ENCODE measurements at regions of chr15 and their contacts with region 1.

Region 1: DNA sequence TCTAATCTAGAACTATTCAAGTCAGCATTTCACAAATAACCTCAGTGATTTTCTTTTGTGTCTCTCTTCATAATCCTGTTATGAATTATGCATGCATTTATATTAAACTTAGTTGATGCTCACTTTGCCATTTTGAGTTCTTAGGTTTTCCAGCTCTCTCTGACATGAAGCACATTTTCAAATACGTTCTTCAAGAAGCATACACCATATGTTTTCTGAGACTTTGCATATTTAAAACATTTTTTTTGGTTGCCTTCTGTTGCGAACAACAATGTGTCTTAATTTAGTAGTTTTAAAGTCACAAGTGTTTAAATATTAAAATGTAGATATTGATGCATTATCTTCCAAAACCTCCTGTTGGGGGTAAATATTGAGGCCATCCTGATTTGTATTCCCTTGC is 37.5 kb downstream of the SH3GL3 start:
- DNase-seq: no peak
- H3K4me3 ChIP-seq: no peak overlapping the region
- H3K27ac ChIP-seq: no peak overlapping the region
- H3K4me1 ChIP-seq: no peaks in the 10 kb centered on the region
- H3K27me3 ChIP-seq: no peaks in the 10 kb centered on the region
- CTCF ChIP-seq: no peak
- POLR2A ChIP-seq: no peak

Region 2: DNA sequence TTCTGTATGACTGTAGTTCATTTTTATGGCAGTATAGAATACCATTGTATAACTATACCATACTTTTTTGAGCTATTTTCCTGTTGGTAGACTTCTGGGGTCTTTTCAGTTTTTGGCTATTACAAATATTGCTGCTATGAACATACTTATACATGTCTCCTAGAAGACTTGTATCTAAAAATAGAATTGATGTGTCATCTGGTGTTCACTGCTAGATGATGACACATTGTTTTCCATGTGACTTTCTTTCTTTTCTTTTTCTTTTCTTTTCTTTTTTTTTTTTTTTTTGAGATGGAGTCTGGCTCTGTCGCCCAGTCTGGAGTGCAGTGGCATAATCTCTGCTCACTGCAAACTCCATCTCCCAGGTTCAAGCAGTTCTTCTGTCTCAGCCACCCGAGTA is 32.3 kb after region 1 on chr15:
- intact Hi-C with region 1: loop called (anchors 2 kb)
- DNase-seq: no peak
- H3K4me3 ChIP-seq: no peak overlapping the region
- H3K27ac ChIP-seq: no peak overlapping the region
- H3K4me1 ChIP-seq: no peaks in the 10 kb centered on the region
- H3K27me3 ChIP-seq: no peaks in the 10 kb centered on the region
- CTCF ChIP-seq: no peak
- POLR2A ChIP-seq: no peak

Measured in vagina (tissue), 2 donors.